Tibial artery (tissue), 4 donors: ENCODE measurements at regions of chr5 and their contacts with region 1.

Region 1: GRCh38 chr5:35926389-35927051 is 11.9 kb downstream of the CAPSL start:
- DNase-seq: no peak
- H3K4me3 ChIP-seq: no peak overlapping the region
- H3K27ac ChIP-seq: no peak overlapping the region
- H3K4me1 ChIP-seq: no peaks in the 10 kb centered on the region
- H3K27me3 ChIP-seq: peaks cover 0 to 24% of the 10 kb centered on the region in 2 donors
- CTCF ChIP-seq: peak; percentile 73 to 77

Region 2: GRCh38 chr5:35762368-35762767 is 164.2 kb before region 1 on chr5:
- intact Hi-C with region 1: loop called (anchors 10 kb)
- DNase-seq: no peak
- H3K4me3 ChIP-seq: no peak overlapping the region
- H3K27ac ChIP-seq: no peak overlapping the region
- H3K4me1 ChIP-seq: no peaks in the 10 kb centered on the region
- H3K27me3 ChIP-seq: no peaks in the 10 kb centered on the region
- CTCF ChIP-seq: no peak

Region 3: GRCh38 chr5:36373527-36374086 is 447.1 kb after region 1 on chr5:
- intact Hi-C with region 1: no loop called
- DNase-seq: peak; percentile 90 to 93
- H3K4me3 ChIP-seq: no peak overlapping the region
- H3K27ac ChIP-seq: peak overlapping the region; percentile 14 to 17
- H3K4me1 ChIP-seq: peaks cover 0 to 20% (median 9%) of the 10 kb centered on the region in 4 donors
- H3K27me3 ChIP-seq: no peaks in the 10 kb centered on the region
- CTCF ChIP-seq: no peak